ENCODE measurements at regions of chr12 and their contacts with region 1.

Region 1: DNA sequence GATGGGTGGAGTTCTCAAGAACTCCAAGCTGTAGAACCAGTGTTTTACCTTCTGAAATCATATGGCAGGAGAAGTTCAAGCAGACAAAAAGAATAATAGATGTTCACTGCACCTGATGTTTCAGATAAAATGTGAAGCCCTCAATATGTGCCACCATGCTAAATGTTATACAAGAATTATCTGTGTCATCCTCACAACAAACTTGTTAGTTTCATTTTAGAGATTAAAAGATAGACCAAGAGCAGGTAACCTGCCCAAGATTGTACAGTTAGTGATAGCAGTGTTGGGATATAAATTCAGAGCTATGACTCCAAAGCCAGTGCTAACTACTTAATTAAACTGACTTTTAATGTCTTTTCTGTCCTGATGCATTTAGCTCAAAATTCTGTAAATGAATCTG is 44.7 kb downstream of the FRS2 start:
- DNase-seq: no peak
- ATAC-seq: peak; percentile 34; the same call in 1 of the 3 replicates
- H3K4me3 ChIP-seq: no peak overlapping the region
- H3K27ac ChIP-seq: no peak overlapping the region
- H3K4me1 ChIP-seq: no peaks in the 10 kb centered on the region; the same call in 1 of the 2 replicates
- H3K27me3 ChIP-seq: no peaks in the 10 kb centered on the region
- CTCF ChIP-seq: no peak
- EP300 ChIP-seq: no peak
- POLR2A ChIP-seq: no peak
- RAD21 ChIP-seq: no peak

Region 2: GRCh38 chr12:69464428-69464827 is 50.4 kb before region 1 on chr12:
- CTCF ChIA-PET with region 1: no interaction called
- POLR2A ChIA-PET with region 1: no interaction called
- RAD21 ChIA-PET with region 1: no interaction called
- SMC1A ChIA-PET with region 1: no interaction called
- in situ Hi-C with region 1: no loop called
- intact Hi-C with region 1: no loop called
- DNase-seq: no peak
- ATAC-seq: peak; percentile 38; the same call in 1 of the 3 replicates
- H3K4me3 ChIP-seq: no peak overlapping the region
- H3K27ac ChIP-seq: no peak overlapping the region
- H3K4me1 ChIP-seq: peaks cover 8% of the 10 kb centered on the region; the same call in 1 of the 2 replicates
- H3K27me3 ChIP-seq: no peaks in the 10 kb centered on the region
- CTCF ChIP-seq: no peak
- EP300 ChIP-seq: no peak
- POLR2A ChIP-seq: no peak
- RAD21 ChIP-seq: no peak

Region 3: GRCh38 chr12:69490920-69491643 is 23.8 kb before region 1 on chr12:
- CTCF ChIA-PET with region 1: interaction called, 3 read pairs
- POLR2A ChIA-PET with region 1: interaction called, 10 read pairs
- RAD21 ChIA-PET with region 1: no interaction called
- SMC1A ChIA-PET with region 1: interaction called, 5 read pairs
- in situ Hi-C with region 1: no loop called
- intact Hi-C with region 1: no loop called
- DNase-seq: no peak
- ATAC-seq: no peak
- H3K4me3 ChIP-seq: no peak overlapping the region
- H3K27ac ChIP-seq: no peak overlapping the region
- H3K4me1 ChIP-seq: no peaks in the 10 kb centered on the region
- H3K27me3 ChIP-seq: no peaks in the 10 kb centered on the region
- CTCF ChIP-seq: no peak
- EP300 ChIP-seq: no peak
- POLR2A ChIP-seq: no peak
- RAD21 ChIP-seq: no peak